Naive thymus-derived CD4-positive, alpha-beta T cell (primary cell): ENCODE measurements at regions of chr6 and their contacts with region 1.

Region 1: DNA sequence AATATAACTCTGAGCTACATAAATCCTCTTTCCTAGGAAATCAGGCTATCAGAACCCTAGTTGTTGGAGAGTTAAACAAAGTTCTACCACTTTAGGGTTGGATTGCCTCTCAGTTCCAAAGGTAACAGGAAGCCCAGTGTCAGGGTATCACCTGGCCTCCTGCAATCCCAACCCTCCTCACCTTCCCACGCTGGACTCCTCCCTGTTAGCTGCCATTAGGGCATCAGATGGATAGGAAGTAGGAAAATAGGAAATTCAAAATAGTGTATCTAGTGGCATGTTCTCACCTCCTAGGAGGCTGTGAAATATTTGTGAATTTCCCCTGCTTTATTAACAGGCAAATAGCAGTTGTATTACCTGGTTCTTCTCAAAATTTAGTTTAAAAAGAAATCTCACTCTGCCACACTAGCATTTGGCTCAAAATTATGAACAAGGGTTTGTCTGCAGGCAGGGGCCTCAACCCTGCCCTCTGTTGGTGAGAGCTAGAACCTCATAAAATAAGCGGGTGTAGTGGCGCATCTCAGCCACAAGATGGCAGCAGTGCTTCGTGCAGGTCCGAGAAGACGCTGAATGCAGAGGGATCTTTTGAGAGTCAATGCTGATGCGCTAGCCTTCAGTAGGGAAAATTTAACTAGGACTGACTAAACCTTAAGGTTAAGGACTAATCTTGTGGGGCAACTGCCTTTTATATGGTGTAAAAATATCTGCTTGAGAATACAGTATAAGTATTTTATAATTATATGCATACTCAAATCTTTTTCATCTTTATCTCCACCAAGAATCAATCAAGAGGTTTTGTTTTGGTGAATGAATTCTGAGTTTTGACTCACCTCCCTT is 209.8 kb upstream of the KCNQ5 start:
- DNase-seq: peak; percentile 61 to 93 (median 79)
- ATAC-seq: peak; percentile 99
- H3K4me3 ChIP-seq: no peak overlapping the region
- H3K4me3 Mint-ChIP-seq: no peak overlapping the region
- H3K27ac ChIP-seq: no peak overlapping the region
- H3K27ac Mint-ChIP-seq: peak overlapping the region in 2 of 9 donors; percentile 15 to 28
- H3K4me1 ChIP-seq: no peaks in the 10 kb centered on the region
- H3K4me1 Mint-ChIP-seq: peaks cover 0 to 2% (median 0%) of the 10 kb centered on the region in 7 donors
- H3K27me3 ChIP-seq: no peaks in the 10 kb centered on the region
- H3K27me3 Mint-ChIP-seq: peaks cover 0 to 13% (median 0%) of the 10 kb centered on the region in 5 donors

Region 2: DNA sequence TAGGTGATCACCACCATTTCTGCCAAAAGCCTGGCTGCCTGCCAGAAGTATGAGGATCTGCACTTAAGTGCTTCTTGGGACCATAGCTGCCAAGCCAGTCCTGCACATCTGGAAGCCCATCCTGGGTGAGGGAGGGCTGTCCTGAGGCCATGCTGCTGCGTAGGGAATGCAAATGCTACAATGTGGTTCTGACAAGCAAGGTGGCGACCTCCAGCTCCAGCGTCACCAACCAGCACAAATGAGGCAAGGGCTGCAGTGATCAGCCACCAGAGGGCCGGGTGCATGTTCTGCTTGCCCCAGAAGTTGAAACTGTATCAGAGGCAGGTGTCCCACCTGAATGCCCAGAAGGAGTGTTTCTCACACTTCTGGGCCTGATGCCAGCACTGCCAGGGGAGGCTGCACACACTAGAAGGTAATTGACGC is 110.6 kb after region 1 on chr6:
- CTCF ChIA-PET with region 1: no interaction called
- POLR2A ChIA-PET with region 1: no interaction called
- intact Hi-C with region 1: loop called in 1 of 2 experiments (anchors 2 kb)
- DNase-seq: peak in 8 of 9 donors; percentile 7 to 54 (median 22)
- ATAC-seq: no peak
- H3K4me3 ChIP-seq: no peak overlapping the region
- H3K4me3 Mint-ChIP-seq: no peak overlapping the region
- H3K27ac ChIP-seq: no peak overlapping the region
- H3K27ac Mint-ChIP-seq: no peak overlapping the region
- H3K4me1 ChIP-seq: no peaks in the 10 kb centered on the region
- H3K4me1 Mint-ChIP-seq: no peaks in the 10 kb centered on the region
- H3K27me3 ChIP-seq: peaks cover 0 to 3% of the 10 kb centered on the region in 2 donors
- H3K27me3 Mint-ChIP-seq: peaks cover 0 to 13% (median 4%) of the 10 kb centered on the region in 5 donors

Region 3: DNA sequence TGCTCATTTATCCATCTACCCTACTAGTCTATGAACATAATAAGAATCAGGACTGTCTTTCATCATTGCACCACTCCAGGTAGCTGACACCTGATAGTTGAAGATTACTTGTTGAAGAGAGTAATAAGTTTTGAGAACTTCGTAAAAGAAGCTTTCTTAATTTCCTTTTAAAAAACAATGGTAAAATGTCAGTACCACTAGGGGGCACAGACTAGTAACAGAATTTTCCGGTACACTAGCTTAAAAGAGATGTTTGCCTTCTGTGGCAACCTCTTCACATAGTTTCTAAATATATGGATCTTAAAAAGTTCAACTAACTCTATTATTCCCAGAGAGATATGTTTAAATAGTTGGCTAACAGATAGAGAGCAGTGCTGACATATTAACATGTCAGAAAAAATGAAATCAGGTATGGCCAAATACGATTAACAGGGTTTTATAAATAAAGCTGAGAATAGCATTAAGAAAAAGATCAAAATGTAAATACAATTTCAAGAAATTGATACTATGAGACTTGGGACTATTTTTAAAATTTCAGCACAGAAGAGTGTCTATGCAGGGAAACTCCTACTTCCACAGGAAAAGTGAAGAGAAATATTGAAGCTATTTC is 204.4 kb after region 1 on chr6:
- CTCF ChIA-PET with region 1: interaction called, 7 read pairs
- POLR2A ChIA-PET with region 1: no interaction called
- intact Hi-C with region 1: loop called in 1 of 2 experiments (anchors 1 kb)
- DNase-seq: peak in 5 of 9 donors; percentile 40 to 58 (median 49)
- ATAC-seq: no peak
- H3K4me3 ChIP-seq: no peak overlapping the region
- H3K4me3 Mint-ChIP-seq: peak overlapping the region in 4 of 10 donors; percentile 12 to 32 (median 22)
- H3K27ac ChIP-seq: no peak overlapping the region
- H3K27ac Mint-ChIP-seq: peak overlapping the region in 7 of 9 donors; percentile 37 to 80 (median 71)
- H3K4me1 ChIP-seq: peaks cover 18 to 21% of the 10 kb centered on the region in 2 donors
- H3K4me1 Mint-ChIP-seq: peaks cover 23 to 70% (median 52%) of the 10 kb centered on the region in 7 donors
- H3K27me3 ChIP-seq: no peaks in the 10 kb centered on the region
- H3K27me3 Mint-ChIP-seq: no peaks in the 10 kb centered on the region

Region 4: DNA sequence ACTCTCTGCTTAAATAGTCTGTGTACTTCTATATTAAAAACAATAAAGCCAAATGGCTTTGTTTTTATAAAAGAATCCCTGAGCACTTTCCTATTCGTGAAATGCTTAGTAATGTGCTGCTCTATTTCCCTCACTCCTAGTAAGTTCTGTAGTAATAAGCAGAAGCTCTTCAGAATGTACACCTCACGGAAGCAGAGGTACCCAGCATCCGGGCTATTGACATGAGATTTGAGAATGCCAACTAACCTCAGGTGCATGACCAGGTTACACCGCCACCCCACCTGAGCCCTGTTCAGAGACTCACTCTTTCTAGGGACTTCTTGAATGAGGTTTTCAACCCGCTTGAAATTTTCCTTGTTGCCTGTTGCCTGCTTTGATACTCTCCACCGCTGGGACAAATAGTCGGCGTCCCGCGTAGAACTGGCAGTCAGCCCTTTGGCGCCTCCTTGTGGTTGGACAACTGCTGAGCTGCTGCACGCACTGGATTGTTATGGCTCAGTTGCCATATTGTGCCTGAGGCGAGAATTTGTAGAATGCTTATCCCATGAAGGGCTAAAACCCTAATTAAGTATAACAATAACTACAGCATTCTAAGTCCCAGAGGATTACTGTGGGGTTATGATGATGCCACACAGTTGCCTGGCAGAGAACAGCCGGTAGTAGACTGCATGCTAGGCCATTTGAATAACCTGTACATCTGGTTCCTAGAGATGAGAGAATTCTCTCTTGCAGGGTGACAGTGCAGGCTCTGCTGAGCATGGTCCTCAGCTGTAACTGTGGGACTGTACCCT is 717.8 kb after region 1 on chr6:
- CTCF ChIA-PET with region 1: interaction called, 87 read pairs
- POLR2A ChIA-PET with region 1: no interaction called
- intact Hi-C with region 1: loop called (anchors 1 kb)
- DNase-seq: peak; percentile 52 to 85 (median 77)
- ATAC-seq: peak; percentile 93
- H3K4me3 ChIP-seq: no peak overlapping the region
- H3K4me3 Mint-ChIP-seq: peak overlapping the region in 8 of 10 donors; percentile 23 to 71 (median 52)
- H3K27ac ChIP-seq: no peak overlapping the region
- H3K27ac Mint-ChIP-seq: peak overlapping the region in 1 of 9 donors; percentile 48
- H3K4me1 ChIP-seq: no peaks in the 10 kb centered on the region
- H3K4me1 Mint-ChIP-seq: peaks cover 0 to 6% (median 3%) of the 10 kb centered on the region in 7 donors
- H3K27me3 ChIP-seq: no peaks in the 10 kb centered on the region
- H3K27me3 Mint-ChIP-seq: peaks cover 0 to 4% (median 0%) of the 10 kb centered on the region in 5 donors

Region 5: DNA sequence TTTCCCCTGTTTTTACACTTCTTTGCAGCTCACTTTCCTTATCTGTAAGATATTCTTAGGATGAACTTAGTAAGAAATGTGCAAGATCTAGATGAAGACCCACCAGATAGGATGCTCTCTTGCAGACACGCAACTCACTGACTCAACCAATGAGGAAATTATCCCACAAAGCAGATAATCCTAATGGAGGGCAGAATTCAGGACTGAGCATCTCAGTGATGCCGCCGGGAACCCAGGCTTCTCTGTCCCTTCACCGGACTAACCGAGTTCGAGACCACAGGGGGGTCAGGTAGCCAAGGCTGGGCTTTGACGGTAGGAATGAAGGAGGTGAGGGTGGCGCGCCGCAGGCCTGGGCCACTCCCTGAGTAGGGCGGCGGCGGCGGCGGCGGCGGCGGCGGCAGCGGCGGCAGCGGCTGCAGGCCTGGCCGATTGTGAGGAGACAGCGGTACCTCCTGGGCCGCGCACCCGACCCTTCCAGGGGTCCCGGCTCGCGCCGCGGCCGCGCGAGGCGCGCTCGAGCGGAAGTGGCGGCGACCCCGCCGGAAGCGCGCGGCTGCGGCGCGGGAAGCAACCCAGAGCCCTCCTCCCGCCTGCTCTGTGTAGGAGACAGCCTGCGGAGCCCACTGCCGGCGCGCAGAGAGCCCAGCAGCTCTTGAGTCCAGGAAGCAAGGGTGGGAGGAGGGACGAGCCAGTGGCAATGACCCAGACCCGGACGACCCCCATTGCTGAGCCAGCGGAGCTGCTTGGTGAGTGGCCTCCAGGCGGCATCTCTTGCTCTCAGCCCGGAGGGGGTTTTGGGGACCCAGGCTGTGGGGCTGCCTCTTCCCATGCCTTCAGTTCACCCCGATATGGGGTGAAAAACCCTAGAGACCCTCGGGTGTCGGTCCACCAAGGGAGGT is 850.8 kb after region 1 on chr6 and contains the start of gene KHDC1:
- CTCF ChIA-PET with region 1: no interaction called
- POLR2A ChIA-PET with region 1: no interaction called
- intact Hi-C with region 1: loop called in 1 of 2 experiments (anchors 5 kb)
- DNase-seq: peak; percentile 24 to 67 (median 55)
- ATAC-seq: peak; percentile 87
- H3K4me3 ChIP-seq: peak within 1 kb of the TSS; percentile 88
- H3K4me3 Mint-ChIP-seq: peak within 1 kb of the TSS; percentile 76 to 92 (median 86)
- H3K27ac ChIP-seq: peak within 1 kb of the TSS; percentile 69
- H3K27ac Mint-ChIP-seq: peak within 1 kb of the TSS; percentile 64 to 89 (median 81)
- H3K4me1 ChIP-seq: peaks cover 12 to 15% of the 10 kb centered on the region in 2 donors
- H3K4me1 Mint-ChIP-seq: peaks cover 18 to 40% (median 35%) of the 10 kb centered on the region in 7 donors
- H3K27me3 ChIP-seq: no peaks in the 10 kb centered on the region
- H3K27me3 Mint-ChIP-seq: no peaks in the 10 kb centered on the region
- total RNA-seq, gene KHDC1: 0.46 to 3.7 (median 0.66) TPM